ENCODE measurements at regions of chr6 and their contacts with region 1.

Region 1: DNA sequence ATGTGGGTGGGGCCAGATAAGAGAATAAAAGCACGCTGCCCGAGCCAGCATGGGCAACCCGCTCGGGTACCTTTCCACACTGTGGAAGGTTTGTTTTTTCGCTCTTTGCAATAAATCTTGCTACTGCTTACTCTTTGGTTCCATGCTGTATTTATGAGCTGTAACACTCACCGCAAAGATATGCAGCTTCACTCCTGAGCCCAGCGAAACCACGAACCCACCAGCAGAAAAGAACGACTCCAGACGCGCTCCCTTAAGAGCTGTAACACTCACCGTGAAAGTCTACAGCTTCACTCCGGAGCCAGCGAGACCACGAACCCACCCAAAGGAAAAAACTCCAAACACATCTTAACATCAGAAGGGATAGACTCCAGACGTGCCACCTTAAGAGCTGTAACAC is 76.7 kb downstream of the TFAP2A start:
- DNase-seq: no peak
- H3K4me3 ChIP-seq: no peak overlapping the region
- H3K27ac ChIP-seq: no peak overlapping the region
- H3K4me1 ChIP-seq: no peaks in the 10 kb centered on the region
- H3K27me3 ChIP-seq: no peaks in the 10 kb centered on the region
- CTCF ChIP-seq: no peak
- EP300 ChIP-seq: no peak
- POLR2A ChIP-seq: no peak

Region 2: DNA sequence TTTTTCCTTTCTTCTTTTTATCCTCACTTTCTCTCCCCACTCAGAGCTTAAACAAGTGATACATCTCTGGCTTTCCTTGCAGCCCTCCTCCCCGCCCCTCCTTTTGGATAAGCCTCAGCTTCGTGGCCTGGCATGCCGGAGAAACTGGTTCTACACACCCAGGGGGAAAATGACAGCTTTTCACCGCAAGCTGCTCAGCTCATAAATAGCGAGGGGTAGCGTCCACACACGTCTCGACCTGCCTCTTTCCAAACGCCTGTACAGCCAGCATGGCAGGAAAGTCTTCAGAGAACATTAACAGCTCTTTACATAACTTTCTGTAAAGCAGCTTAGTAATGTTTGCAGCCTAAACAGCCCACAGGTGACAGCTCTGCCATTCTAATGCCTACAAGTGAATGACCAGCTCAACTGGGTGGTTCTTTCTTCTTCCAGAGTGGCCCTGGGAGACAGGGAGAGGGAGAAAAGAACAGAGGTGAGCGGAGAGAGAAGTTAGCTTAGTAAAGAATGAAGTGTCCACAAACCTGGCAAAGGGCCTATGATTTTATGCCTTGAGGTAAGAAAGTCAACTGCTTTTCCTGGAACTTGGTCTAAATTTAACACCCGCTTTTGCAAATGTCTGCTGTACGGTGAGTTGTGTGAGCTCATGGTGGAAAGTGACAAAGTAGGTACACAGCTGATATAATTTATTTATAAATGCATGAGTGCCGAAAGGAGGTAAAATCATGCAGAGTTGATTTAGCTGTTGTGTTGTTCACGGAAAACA is 174.8 kb before region 1 on chr6:
- intact Hi-C with region 1: no loop called
- DNase-seq: no peak
- H3K4me3 ChIP-seq: no peak overlapping the region
- H3K27ac ChIP-seq: no peak overlapping the region
- H3K4me1 ChIP-seq: no peaks in the 10 kb centered on the region
- H3K27me3 ChIP-seq: no peaks in the 10 kb centered on the region
- CTCF ChIP-seq: no peak
- EP300 ChIP-seq: no peak
- POLR2A ChIP-seq: no peak

Region 3: GRCh38 chr6:10383781-10384616 is 45.8 kb after region 1 on chr6:
- intact Hi-C with region 1: no loop called
- DNase-seq: no peak
- H3K4me3 ChIP-seq: no peak overlapping the region
- H3K27ac ChIP-seq: no peak overlapping the region
- H3K4me1 ChIP-seq: peaks cover 2% of the 10 kb centered on the region
- H3K27me3 ChIP-seq: peaks cover 2% of the 10 kb centered on the region
- CTCF ChIP-seq: no peak
- EP300 ChIP-seq: no peak
- POLR2A ChIP-seq: no peak

Region 4: DNA sequence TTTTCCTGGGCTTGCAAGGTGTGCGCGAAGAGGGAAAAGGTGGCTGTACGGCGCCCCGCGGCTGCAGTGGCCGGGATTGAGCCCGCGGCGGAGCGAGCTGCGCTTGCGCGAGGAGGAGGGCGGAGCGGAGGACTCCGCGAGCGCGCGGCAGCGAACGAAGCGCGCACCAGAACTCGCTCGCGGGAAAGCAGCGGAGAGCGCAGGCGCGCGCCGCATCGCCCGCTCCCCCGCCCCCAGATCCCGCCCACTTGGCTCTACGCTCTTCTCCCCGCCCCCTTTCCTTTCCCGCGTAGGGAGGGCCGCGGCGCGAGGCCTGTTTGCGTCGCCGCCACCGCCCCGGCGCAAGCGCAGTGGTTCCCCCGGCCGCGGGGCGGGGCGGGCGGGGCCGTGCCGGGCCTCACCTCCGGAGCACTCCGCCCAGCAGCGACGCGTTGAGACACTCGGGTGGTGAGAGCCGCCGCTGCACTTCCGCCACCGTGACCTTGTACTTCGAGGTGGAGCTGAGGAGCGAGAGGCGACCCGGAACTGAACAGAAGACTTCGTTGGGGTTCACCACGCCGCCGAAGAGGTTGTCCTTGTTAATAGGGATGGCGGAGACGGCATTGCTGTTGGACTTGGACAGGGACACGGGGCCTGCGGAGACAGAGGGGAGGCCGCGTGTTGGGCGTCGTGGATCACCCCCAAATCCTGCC is 66.1 kb after region 1 on chr6:
- intact Hi-C with region 1: no loop called
- DNase-seq: peak; percentile 84 to 93 (median 87)
- H3K4me3 ChIP-seq: peak overlapping the region; percentile 32
- H3K27ac ChIP-seq: peak overlapping the region in 1 of 2 donors; percentile 36
- H3K4me1 ChIP-seq: peaks cover 6% of the 10 kb centered on the region
- H3K27me3 ChIP-seq: no peaks in the 10 kb centered on the region
- CTCF ChIP-seq: peak in 1 of 3 donors; percentile 17
- EP300 ChIP-seq: no peak
- POLR2A ChIP-seq: no peak

Region 5: GRCh38 chr6:10518557-10519407 is 180.6 kb after region 1 on chr6:
- intact Hi-C with region 1: loop called in 1 of 4 experiments (anchors 5 kb)
- DNase-seq: no peak
- H3K4me3 ChIP-seq: no peak overlapping the region
- H3K27ac ChIP-seq: no peak overlapping the region
- H3K4me1 ChIP-seq: no peaks in the 10 kb centered on the region
- H3K27me3 ChIP-seq: no peaks in the 10 kb centered on the region
- CTCF ChIP-seq: no peak
- EP300 ChIP-seq: no peak
- POLR2A ChIP-seq: no peak